T-cell (primary cell): ENCODE measurements at regions of chr15 and their contacts with region 1.

Region 1: GRCh38 chr15:33086507-33087121 is 107.9 kb downstream of the FMN1 start:
- DNase-seq: peak in 2 of 35 experiments; percentile 7 to 71
- ATAC-seq: peak; percentile 50 to 77 (median 61)
- H3K4me3 ChIP-seq: no peak overlapping the region
- H3K4me3 Mint-ChIP-seq: peak overlapping the region in 2 of 3 donors; percentile 45 to 49
- H3K27ac ChIP-seq: no peak overlapping the region
- H3K27ac Mint-ChIP-seq: peak overlapping the region in 1 of 2 donors; percentile 34
- H3K4me1 ChIP-seq: no peaks in the 10 kb centered on the region
- H3K4me1 Mint-ChIP-seq: peaks cover 3 to 30% (median 28%) of the 10 kb centered on the region in 3 donors
- H3K27me3 ChIP-seq: no peaks in the 10 kb centered on the region
- H3K27me3 Mint-ChIP-seq: no peaks in the 10 kb centered on the region

Region 2: DNA sequence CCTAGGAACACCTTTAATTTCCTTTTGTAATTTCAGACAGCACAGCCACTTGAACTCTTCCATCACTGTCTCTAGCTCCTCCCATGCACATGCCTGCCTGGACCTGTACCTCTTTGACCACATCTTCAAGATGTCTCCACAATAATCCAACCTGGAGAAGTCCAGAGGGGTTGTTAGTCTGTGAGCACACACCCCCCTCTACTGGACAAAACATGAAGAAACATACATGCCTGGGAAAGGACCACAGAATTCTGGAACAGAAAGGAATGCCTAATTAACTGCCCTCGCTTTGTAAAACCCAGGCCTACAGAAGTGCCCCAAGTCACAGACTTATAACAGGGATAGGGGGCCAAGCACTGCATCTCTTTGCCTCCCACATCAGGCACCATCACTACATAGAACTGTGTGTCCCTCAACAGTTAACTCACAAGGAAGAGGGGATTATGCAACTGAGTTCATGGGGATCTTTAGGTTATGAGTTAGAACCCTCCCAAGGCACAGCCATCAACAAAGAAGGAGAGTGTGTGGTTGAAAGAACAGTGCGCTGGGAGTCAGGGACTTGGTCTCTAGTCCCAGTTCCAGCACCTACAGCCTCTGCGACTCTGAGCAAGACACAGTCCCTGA is 46.2 kb after region 1 on chr15:
- CTCF ChIA-PET with region 1: interaction called in 1 of 2 experiments, 13 read pairs
- POLR2A ChIA-PET with region 1: no interaction called
- DNase-seq: peak in 5 of 35 experiments; percentile 7 to 53 (median 9)
- ATAC-seq: peak in 1 of 4 experiments; percentile 66
- H3K4me3 ChIP-seq: no peak overlapping the region
- H3K4me3 Mint-ChIP-seq: no peak overlapping the region
- H3K27ac ChIP-seq: no peak overlapping the region
- H3K27ac Mint-ChIP-seq: no peak overlapping the region
- H3K4me1 ChIP-seq: peaks cover 0 to 3% of the 10 kb centered on the region in 2 experiments
- H3K4me1 Mint-ChIP-seq: peaks cover 14 to 20% (median 16%) of the 10 kb centered on the region in 3 donors
- H3K27me3 ChIP-seq: peaks cover 0 to 8% of the 10 kb centered on the region in 2 experiments
- H3K27me3 Mint-ChIP-seq: no peaks in the 10 kb centered on the region

Region 3: GRCh38 chr15:33700695-33701304 is 614.2 kb after region 1 on chr15:
- CTCF ChIA-PET with region 1: interaction called, 9 to 10 read pairs
- POLR2A ChIA-PET with region 1: no interaction called
- DNase-seq: peak in 34 of 35 experiments; percentile 8 to 72 (median 40)
- ATAC-seq: peak; percentile 52 to 70 (median 60)
- H3K4me3 ChIP-seq: no peak overlapping the region
- H3K4me3 Mint-ChIP-seq: no peak overlapping the region
- H3K27ac ChIP-seq: no peak overlapping the region
- H3K27ac Mint-ChIP-seq: no peak overlapping the region
- H3K4me1 ChIP-seq: no peaks in the 10 kb centered on the region
- H3K4me1 Mint-ChIP-seq: peaks cover 0 to 4% (median 0%) of the 10 kb centered on the region in 3 donors
- H3K27me3 ChIP-seq: peaks cover 0 to 11% of the 10 kb centered on the region in 2 experiments
- H3K27me3 Mint-ChIP-seq: peaks cover 3 to 17% of the 10 kb centered on the region in 2 donors